PC-9 (cell line): ENCODE measurements at regions of chr4 and their contacts with region 1.

Region 1: DNA sequence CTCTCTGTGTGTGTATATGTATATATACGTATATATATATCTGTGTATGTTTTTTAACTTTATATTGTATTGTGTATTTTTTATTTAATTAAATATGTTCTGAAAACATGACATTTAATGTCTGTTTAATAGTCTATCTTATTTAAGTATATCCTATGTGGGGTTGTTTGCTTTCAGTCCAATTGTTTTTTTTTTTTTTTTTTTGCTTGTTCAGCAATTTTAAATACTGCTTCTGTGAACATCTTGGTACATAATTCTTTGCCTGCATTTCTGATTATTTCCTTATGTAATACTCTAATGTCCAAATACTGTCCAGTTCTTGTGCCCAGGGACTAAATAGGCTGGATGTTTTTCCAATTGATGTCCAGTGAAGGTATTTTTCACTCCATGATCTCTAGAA is 45.1 kb upstream of the MAD2L1 start:
- DNase-seq: no peak
- H3K4me3 ChIP-seq: no peak overlapping the region
- H3K27ac ChIP-seq: no peak overlapping the region
- H3K4me1 ChIP-seq: no peaks in the 10 kb centered on the region
- H3K27me3 ChIP-seq: no peaks in the 10 kb centered on the region
- CTCF ChIP-seq: no peak

Region 2: GRCh38 chr4:120156120-120156718 is 44.5 kb after region 1 on chr4:
- CTCF ChIA-PET with region 1: no interaction called
- POLR2A ChIA-PET with region 1: no interaction called
- intact Hi-C with region 1: no loop called
- DNase-seq: peak; percentile 12 to 41
- H3K4me3 ChIP-seq: no peak overlapping the region
- H3K27ac ChIP-seq: no peak overlapping the region
- H3K4me1 ChIP-seq: no peaks in the 10 kb centered on the region
- H3K27me3 ChIP-seq: no peaks in the 10 kb centered on the region
- CTCF ChIP-seq: peak; percentile 87

Region 3: GRCh38 chr4:120277391-120277790 is 165.6 kb after region 1 on chr4:
- CTCF ChIA-PET with region 1: interaction called, 13 read pairs
- POLR2A ChIA-PET with region 1: no interaction called
- intact Hi-C with region 1: no loop called
- DNase-seq: no peak
- H3K4me3 ChIP-seq: no peak overlapping the region
- H3K27ac ChIP-seq: no peak overlapping the region
- H3K4me1 ChIP-seq: no peaks in the 10 kb centered on the region
- H3K27me3 ChIP-seq: no peaks in the 10 kb centered on the region
- CTCF ChIP-seq: no peak